ENCODE measurements at regions of chr15 and their contacts with region 1.

Region 1: DNA sequence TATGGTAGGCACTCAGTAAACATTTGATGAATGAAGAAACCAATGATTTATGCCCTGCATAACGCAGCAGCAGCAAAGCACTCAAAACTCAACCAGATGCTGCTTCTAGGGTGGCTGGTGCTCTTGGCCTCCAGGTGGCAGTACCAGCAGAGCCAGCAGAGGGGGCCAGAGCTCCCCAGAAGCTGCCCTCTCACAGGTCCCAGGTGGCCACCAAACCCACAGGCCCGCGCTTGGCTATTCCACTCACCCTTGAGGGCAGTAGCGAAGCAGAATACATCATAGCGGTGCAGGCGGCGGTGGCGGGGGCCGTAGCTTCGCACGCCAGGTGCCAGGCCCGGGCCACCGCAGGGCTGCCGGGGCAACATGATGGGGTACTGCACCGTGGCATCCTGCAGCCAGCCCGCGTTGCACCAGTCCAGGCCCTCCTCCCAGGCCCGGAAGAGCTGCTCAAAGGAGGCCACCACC is 16.6 kb downstream of the HAPLN3 start:
- DNase-seq: peak; percentile 39
- H3K4me3 ChIP-seq: no peak overlapping the region
- H3K27ac ChIP-seq: no peak overlapping the region
- H3K4me1 ChIP-seq: no peaks in the 10 kb centered on the region
- H3K27me3 ChIP-seq: no peaks in the 10 kb centered on the region
- CTCF ChIP-seq: peak; percentile 72 to 87
- POLR2A ChIP-seq: no peak

Region 2: DNA sequence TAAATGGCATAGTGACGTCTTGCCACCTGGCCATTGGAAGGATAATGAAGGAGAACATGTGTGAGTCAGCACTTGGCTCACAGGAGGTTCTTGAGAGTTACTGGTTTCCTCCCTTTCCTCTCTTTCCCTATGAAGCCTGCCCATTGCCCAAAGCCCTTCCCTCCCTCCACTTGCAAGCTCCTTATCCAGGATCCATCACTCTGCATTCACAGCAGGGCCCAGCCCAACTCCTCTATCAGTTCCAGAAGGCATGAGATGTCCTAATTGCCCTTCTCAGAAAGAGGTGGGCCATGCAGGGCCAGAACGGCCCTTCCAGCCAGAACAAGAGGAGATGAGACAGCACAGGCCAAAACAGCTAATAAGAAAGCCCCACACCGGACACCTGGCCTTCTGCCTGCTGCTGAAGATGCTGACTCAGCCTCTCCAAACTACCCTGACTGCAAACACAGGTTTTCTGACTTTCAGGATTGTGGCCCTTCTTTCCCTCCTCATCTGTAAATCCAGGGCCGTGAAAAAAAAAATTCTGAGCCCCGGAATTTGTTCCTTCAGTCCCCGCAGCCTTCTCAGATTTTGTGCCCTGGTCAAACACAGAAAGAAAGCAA is 13.2 kb before region 1 on chr15:
- CTCF ChIA-PET with region 1: interaction called, 29 read pairs
- POLR2A ChIA-PET with region 1: no interaction called
- dilution Hi-C with region 1: no loop called
- intact Hi-C with region 1: no loop called
- DNase-seq: peak; percentile 8
- H3K4me3 ChIP-seq: no peak overlapping the region
- H3K27ac ChIP-seq: no peak overlapping the region
- H3K4me1 ChIP-seq: peaks cover 6% of the 10 kb centered on the region
- H3K27me3 ChIP-seq: peaks cover 0 to 5% of the 10 kb centered on the region in 2 experiments
- CTCF ChIP-seq: no peak
- POLR2A ChIP-seq: no peak

Region 3: GRCh38 chr15:88890495-88890894 is 11.7 kb after region 1 on chr15:
- CTCF ChIA-PET with region 1: interaction called, 24 read pairs
- POLR2A ChIA-PET with region 1: interaction called, 4 read pairs
- dilution Hi-C with region 1: no loop called
- intact Hi-C with region 1: no loop called
- DNase-seq: no peak
- H3K4me3 ChIP-seq: no peak overlapping the region
- H3K27ac ChIP-seq: no peak overlapping the region
- H3K4me1 ChIP-seq: peaks cover 12% of the 10 kb centered on the region
- H3K27me3 ChIP-seq: no peaks in the 10 kb centered on the region
- CTCF ChIP-seq: no peak
- POLR2A ChIP-seq: no peak

Region 4: DNA sequence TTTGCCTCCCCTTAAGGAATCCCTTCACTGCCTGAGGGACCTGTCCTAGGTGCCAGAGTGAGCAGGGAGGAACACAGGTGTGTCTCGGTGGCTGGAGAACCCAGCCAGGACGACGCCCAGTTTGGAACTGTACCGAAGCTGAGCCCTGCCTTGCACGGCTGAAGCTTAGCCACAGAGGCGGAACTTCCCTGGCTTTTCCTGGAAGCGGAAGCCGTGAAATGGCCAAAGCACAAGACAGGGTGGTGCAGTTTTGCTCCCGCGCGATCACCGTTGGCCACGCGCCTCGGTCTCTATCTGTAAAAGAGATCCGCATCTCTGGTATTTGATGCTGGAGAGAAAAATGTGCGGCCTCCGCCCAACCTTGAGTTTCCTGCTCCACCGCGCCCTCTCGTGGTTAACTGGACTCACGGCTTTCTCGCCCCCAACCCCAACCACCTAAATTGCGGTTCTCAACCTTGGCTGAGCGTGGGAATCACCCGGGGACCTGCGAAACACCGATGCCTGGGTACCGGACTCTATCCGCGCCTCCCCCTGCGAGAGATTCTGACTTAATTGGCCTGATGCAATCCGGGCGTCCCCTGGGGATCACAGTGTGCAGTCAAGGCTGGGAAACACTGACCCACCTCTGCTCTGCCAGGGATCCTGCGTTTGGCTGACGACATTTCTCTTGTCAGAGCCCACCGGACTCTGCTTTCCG is 138.8 kb after region 1 on chr15:
- CTCF ChIA-PET with region 1: interaction called, 25 read pairs
- POLR2A ChIA-PET with region 1: no interaction called
- dilution Hi-C with region 1: no loop called
- intact Hi-C with region 1: loop called (anchors 1 kb)
- DNase-seq: peak; percentile 64
- H3K4me3 ChIP-seq: peak overlapping the region in 1 of 3 experiments; percentile 21
- H3K27ac ChIP-seq: no peak overlapping the region
- H3K4me1 ChIP-seq: no peaks in the 10 kb centered on the region
- H3K27me3 ChIP-seq: peaks cover 7 to 22% of the 10 kb centered on the region in 2 experiments
- CTCF ChIP-seq: peak; percentile 92
- POLR2A ChIP-seq: no peak

Region 5: DNA sequence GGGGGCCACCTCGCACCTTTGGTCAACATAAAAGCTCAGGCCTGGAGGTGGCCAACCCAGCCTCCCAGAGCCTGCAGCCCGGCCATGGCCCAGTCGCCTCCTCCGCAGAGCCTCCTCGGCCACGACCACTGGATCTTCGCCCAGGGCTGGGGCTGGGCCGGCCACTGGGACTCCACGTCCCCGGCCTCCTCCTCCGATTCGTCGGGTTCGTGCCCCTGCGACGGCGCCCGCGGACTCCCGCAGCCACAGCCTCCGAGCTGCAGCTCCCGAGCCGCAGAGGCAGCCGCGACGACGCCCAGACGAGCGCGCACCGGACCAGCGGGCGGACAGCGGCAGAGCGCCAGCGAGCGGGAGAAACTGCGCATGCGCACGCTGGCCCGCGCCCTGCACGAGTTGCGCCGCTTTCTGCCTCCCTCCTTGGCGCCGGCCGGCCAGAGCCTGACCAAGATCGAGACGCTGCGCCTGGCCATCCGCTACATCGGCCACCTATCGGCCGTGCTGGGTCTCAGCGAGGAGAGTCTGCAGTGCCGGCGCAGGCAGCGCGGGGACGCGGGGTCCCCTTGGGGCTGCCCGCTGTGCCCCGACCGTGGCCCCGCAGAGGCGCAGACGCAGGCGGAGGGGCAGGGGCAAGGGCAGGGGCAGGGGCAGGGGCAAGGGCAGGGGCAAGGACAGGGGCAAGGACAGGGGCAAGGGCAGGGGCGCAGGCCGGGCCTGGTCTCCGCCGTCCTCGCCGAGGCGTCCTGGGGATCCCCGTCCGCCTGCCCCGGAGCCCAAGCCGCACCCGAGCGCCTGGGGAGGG is 897.7 kb after region 1 on chr15 and contains the start of gene MESP2:
- CTCF ChIA-PET with region 1: no interaction called
- POLR2A ChIA-PET with region 1: no interaction called
- dilution Hi-C with region 1: no loop called
- intact Hi-C with region 1: no loop called
- DNase-seq: peak; percentile 88
- H3K4me3 ChIP-seq: peak within 1 kb of the TSS in 2 of 3 experiments; percentile 4 to 30
- H3K27ac ChIP-seq: no peak within 1 kb of the TSS
- H3K4me1 ChIP-seq: peaks cover 6% of the 10 kb centered on the region
- H3K27me3 ChIP-seq: no peaks in the 10 kb centered on the region
- CTCF ChIP-seq: peak; percentile 55 to 73
- POLR2A ChIP-seq: no peak
- total RNA-seq, gene MESP2: 0.42 TPM in 1 of 2 replicates, not detected in the other